PC-3 (cell line): ENCODE measurements at regions of chr1 and their contacts with region 1.

Region 1: GRCh38 chr1:183841950-183842794 is 37.3 kb downstream of the RGL1 start:
- DNase-seq: peak; percentile 76
- ATAC-seq: peak; percentile 96
- H3K4me3 ChIP-seq: peak overlapping the region; percentile 44; the same call in 1 of the 2 replicates
- H3K27ac ChIP-seq: peak overlapping the region; percentile 79
- H3K4me1 ChIP-seq: peaks cover 40% of the 10 kb centered on the region
- H3K27me3 ChIP-seq: no peaks in the 10 kb centered on the region
- CTCF ChIP-seq: no peak

Region 2: GRCh38 chr1:183633633-183634343 is 208.4 kb before region 1 on chr1:
- CTCF ChIA-PET with region 1: no interaction called
- POLR2A ChIA-PET with region 1: no interaction called
- intact Hi-C with region 1: no loop called
- DNase-seq: peak; percentile 74
- ATAC-seq: peak; percentile 38
- H3K4me3 ChIP-seq: peak overlapping the region; percentile 93
- H3K27ac ChIP-seq: peak overlapping the region; percentile 71; the same call in 1 of the 2 replicates
- H3K4me1 ChIP-seq: peaks cover 32% of the 10 kb centered on the region
- H3K27me3 ChIP-seq: no peaks in the 10 kb centered on the region
- CTCF ChIP-seq: peak; percentile 64

Region 3: GRCh38 chr1:183804881-183805841 is 37.0 kb before region 1 on chr1 and contains the start of gene RGL1:
- CTCF ChIA-PET with region 1: no interaction called
- POLR2A ChIA-PET with region 1: no interaction called
- intact Hi-C with region 1: loop called (anchors 1 kb)
- DNase-seq: peak; percentile 67
- ATAC-seq: peak; percentile 85
- H3K4me3 ChIP-seq: peak within 1 kb of the TSS; percentile 76
- H3K27ac ChIP-seq: no peak within 1 kb of the TSS
- H3K4me1 ChIP-seq: peaks cover 32% of the 10 kb centered on the region
- H3K27me3 ChIP-seq: no peaks in the 10 kb centered on the region
- CTCF ChIP-seq: no peak
- total RNA-seq, gene RGL1: 1.5 and 1.9 TPM in 2 replicates

Region 4: GRCh38 chr1:183859831-183860230 is 17.7 kb after region 1 on chr1:
- CTCF ChIA-PET with region 1: no interaction called
- POLR2A ChIA-PET with region 1: no interaction called
- intact Hi-C with region 1: no loop called
- DNase-seq: no peak
- ATAC-seq: no peak
- H3K4me3 ChIP-seq: no peak overlapping the region
- H3K27ac ChIP-seq: no peak overlapping the region
- H3K4me1 ChIP-seq: no peaks in the 10 kb centered on the region
- H3K27me3 ChIP-seq: no peaks in the 10 kb centered on the region
- CTCF ChIP-seq: no peak